ENCODE measurements at regions of chr15 and their contacts with region 1.

Region 1: GRCh38 chr15:73802431-73803041 is 49.4 kb upstream of the INSYN1 start:
- DNase-seq: peak; percentile 77 to 83
- ATAC-seq: peak; percentile 87 to 89
- H3K4me3 ChIP-seq: no peak overlapping the region
- H3K27ac ChIP-seq: peak overlapping the region; percentile 2 to 72 (median 31)
- H3K4me1 ChIP-seq: peaks cover 44 to 54% of the 10 kb centered on the region in 2 donors
- H3K27me3 ChIP-seq: no peaks in the 10 kb centered on the region
- CTCF ChIP-seq: no peak
- POLR2A ChIP-seq: no peak

Region 2: GRCh38 chr15:73838831-73839426 is 36.4 kb after region 1 on chr15:
- in situ Hi-C with region 1: no loop called
- intact Hi-C with region 1: loop called (anchors 1 kb)
- DNase-seq: peak; percentile 30 to 70
- ATAC-seq: peak; percentile 71 to 78
- H3K4me3 ChIP-seq: no peak overlapping the region
- H3K27ac ChIP-seq: no peak overlapping the region
- H3K4me1 ChIP-seq: peaks cover 13 to 17% of the 10 kb centered on the region in 2 donors
- H3K27me3 ChIP-seq: peaks cover 0 to 4% (median 0%) of the 10 kb centered on the region in 3 donors
- CTCF ChIP-seq: no peak
- POLR2A ChIP-seq: no peak